Mammary epithelial cell (primary cell): ENCODE measurements at regions of chr7 and their contacts with region 1.

Region 1: GRCh38 chr7:47546733-47547494 is 35.0 kb downstream of the TNS3 start:
- DNase-seq: no peak
- H3K4me3 ChIP-seq: no peak overlapping the region
- H3K27ac ChIP-seq: no peak overlapping the region
- H3K4me1 ChIP-seq: peaks cover 13% of the 10 kb centered on the region
- H3K27me3 ChIP-seq: no peaks in the 10 kb centered on the region
- CTCF ChIP-seq: no peak

Region 2: GRCh38 chr7:47493976-47494911 is 52.7 kb before region 1 on chr7:
- CTCF ChIA-PET with region 1: no interaction called
- dilution Hi-C with region 1: loop called (anchors 5 kb)
- in situ Hi-C with region 1: no loop called
- intact Hi-C with region 1: no loop called
- DNase-seq: peak; percentile 29
- H3K4me3 ChIP-seq: no peak overlapping the region
- H3K27ac ChIP-seq: no peak overlapping the region
- H3K4me1 ChIP-seq: peaks cover 4% of the 10 kb centered on the region
- H3K27me3 ChIP-seq: no peaks in the 10 kb centered on the region
- CTCF ChIP-seq: no peak

Region 3: GRCh38 chr7:47635091-47636080 is 88.5 kb after region 1 on chr7:
- CTCF ChIA-PET with region 1: no interaction called
- dilution Hi-C with region 1: no loop called
- in situ Hi-C with region 1: no loop called
- intact Hi-C with region 1: no loop called
- DNase-seq: peak; percentile 69
- H3K4me3 ChIP-seq: peak overlapping the region; percentile 23 to 49 (median 31)
- H3K27ac ChIP-seq: no peak overlapping the region
- H3K4me1 ChIP-seq: peaks cover 30% of the 10 kb centered on the region
- H3K27me3 ChIP-seq: no peaks in the 10 kb centered on the region
- CTCF ChIP-seq: no peak